ENCODE measurements at regions of chr16 and their contacts with region 1.

Region 1: DNA sequence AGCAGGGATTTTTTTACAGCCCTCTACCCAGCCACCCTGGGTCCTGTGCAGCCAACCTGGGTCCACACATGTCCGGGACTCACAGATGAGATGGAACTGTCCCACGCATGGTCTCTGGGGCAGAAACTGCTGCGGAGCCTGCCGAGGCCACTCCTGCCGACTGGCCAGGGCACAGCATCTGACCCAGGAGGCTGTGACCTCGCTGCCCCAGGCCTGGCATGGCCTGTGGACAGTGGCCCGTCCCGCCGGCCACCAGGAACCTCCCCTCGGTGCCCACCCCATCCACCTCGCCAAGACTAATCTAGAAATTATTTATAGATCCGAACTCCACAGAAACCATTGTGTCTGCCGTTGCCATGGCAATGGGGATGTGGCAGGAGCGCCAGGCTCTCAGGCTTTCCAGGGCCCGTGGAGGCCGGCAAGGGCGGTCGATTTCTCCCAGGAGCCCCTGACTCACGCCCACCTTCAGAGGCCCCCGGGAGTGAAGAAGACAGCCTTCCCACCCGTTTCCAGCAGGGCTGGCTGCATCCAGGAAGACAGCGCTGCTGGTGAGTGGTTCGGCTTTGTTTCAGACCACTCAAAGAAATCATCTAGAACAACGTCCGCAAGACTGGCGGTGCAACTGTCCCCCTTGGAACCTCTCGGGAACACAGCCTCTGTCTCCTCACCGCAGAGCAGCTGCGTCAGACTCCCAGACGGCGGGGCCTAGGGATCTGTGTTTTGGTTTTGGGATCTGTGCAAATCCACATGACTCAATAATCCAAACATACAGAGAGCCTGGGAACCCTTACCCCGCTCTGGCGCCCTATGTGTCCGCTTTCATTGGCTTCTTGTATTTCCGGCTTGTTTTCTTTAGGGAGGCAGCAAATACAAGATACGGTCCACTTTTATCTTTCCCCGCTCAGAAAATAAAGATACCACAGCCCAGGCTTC is 48.4 kb upstream of the ZCCHC14 start:
- DNase-seq: no peak
- H3K4me3 ChIP-seq: peak overlapping the region in 2 of 3 donors; percentile 2 to 12
- H3K27ac ChIP-seq: peak overlapping the region in 1 of 2 donors; percentile 52
- H3K4me1 ChIP-seq: no peaks in the 10 kb centered on the region
- H3K27me3 ChIP-seq: peaks cover 0 to 20% of the 10 kb centered on the region in 2 donors
- CTCF ChIP-seq: no peak
- POLR2A ChIP-seq: no peak

Region 2: GRCh38 chr16:86975445-86975844 is 565.8 kb before region 1 on chr16:
- intact Hi-C with region 1: no loop called
- DNase-seq: peak in 1 of 2 donors; percentile 55
- H3K4me3 ChIP-seq: no peak overlapping the region
- H3K27ac ChIP-seq: peak overlapping the region in 1 of 2 donors; percentile 22
- H3K4me1 ChIP-seq: no peaks in the 10 kb centered on the region
- H3K27me3 ChIP-seq: no peaks in the 10 kb centered on the region
- CTCF ChIP-seq: no peak
- POLR2A ChIP-seq: no peak

Region 3: DNA sequence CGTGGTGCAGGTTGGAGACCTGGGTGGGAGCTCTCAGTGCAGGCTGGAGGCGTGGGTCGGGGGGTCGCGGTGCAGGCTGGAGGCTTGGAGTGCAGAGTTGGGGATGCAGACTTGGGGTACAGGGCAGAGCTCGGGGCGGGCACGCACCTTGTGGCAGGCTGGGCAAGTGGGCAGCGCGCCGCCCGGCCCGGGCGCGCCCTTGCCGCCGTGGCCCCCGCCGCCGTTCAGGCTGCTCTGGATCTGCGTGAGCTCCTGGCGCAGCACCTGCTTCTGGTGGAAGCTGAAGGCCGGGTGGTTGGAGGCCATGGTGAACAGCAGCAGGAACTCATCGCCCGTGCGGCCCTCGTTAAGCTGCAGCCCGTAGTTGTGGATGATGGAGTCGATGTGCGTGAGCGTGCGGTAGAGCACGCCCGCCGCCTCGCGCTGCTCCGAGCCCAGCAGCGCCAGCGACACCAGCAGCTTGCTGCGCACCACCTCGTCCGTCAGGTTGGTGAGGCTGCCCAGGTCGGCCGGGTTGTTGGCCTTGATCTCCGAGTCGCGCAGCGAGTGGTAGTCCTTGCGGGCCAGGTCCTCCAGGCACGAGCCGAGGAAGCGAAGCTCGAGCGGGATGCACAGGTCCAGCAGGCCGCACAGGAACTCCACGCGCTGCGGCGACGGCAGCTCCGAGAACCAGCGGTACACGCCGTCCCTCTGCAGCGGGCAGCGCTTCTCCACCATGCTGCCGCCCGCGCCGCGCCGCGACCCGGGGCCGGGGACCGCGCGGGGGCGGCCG is 49.5 kb before region 1 on chr16:
- intact Hi-C with region 1: loop called (anchors 1 kb)
- DNase-seq: no peak
- H3K4me3 ChIP-seq: peak overlapping the region; percentile 42 to 76 (median 52)
- H3K27ac ChIP-seq: peak overlapping the region in 1 of 2 donors; percentile 63
- H3K4me1 ChIP-seq: peaks cover 3 to 4% of the 10 kb centered on the region in 2 donors
- H3K27me3 ChIP-seq: no peaks in the 10 kb centered on the region
- CTCF ChIP-seq: no peak
- POLR2A ChIP-seq: no peak